ENCODE measurements at regions of chr4 and their contacts with region 1.

Region 1: GRCh38 chr4:15805583-15806517 is 27.7 kb downstream of the CD38 start:
- DNase-seq: peak; percentile 64 to 83 (median 80)
- H3K4me3 ChIP-seq: no peak overlapping the region
- H3K27ac ChIP-seq: no peak overlapping the region
- H3K4me1 ChIP-seq: peaks cover 11 to 18% (median 15%) of the 10 kb centered on the region in 4 experiments
- H3K27me3 ChIP-seq: peaks cover 0 to 3% (median 0%) of the 10 kb centered on the region in 5 experiments

Region 2: DNA sequence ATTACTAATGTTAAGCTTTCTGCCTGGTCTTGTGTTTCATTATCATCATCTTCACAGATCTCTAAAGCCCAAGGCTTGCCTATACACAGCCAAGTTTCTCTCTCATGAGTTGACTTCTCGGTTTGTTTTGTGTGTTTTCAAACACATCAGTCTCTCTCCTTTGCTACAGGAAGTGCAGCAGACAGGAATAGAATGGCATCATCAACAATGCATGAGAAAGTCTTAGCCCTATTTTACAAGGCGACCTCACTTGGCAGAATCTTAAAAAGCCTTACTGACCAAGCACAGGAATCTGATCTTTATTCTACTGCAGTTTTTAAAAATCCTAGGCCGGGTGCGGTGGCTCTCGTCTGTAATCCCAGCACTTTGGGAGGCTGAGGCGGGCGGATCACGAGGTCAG is 299.4 kb before region 1 on chr4:
- CTCF ChIA-PET with region 1: no interaction called
- POLR2A ChIA-PET with region 1: no interaction called
- DNase-seq: no peak
- H3K4me3 ChIP-seq: no peak overlapping the region
- H3K27ac ChIP-seq: no peak overlapping the region
- H3K4me1 ChIP-seq: no peaks in the 10 kb centered on the region
- H3K27me3 ChIP-seq: no peaks in the 10 kb centered on the region

Region 3: GRCh38 chr4:15756361-15756861 is 49.4 kb before region 1 on chr4:
- CTCF ChIA-PET with region 1: interaction called, 36 read pairs
- POLR2A ChIA-PET with region 1: no interaction called
- DNase-seq: peak; percentile 94 to 99 (median 98)
- H3K4me3 ChIP-seq: peak overlapping the region in 5 of 7 experiments; percentile 16 to 72 (median 43)
- H3K27ac ChIP-seq: peak overlapping the region; percentile 13 to 30
- H3K4me1 ChIP-seq: peaks cover 20 to 50% (median 36%) of the 10 kb centered on the region in 4 experiments
- H3K27me3 ChIP-seq: no peaks in the 10 kb centered on the region

Region 4: DNA sequence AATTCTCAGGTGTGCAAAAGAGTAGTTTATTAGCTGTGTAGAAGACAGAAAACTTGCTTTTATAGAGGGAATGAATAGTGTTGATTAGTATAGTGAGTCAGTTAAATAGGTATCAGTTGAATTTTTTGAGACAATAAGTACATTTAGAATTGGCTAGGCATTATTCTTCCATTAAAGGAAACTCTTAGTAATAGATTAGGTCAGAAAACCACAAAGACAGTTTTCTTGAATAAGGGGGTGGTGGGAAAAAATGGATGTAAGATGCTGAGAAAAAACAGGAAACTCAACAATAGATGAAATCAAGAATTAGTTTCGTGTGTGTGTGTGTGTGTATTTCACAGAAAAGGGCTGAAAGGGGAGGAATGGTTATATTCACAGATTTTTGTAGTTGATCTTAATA is 10.9 kb before region 1 on chr4:
- CTCF ChIA-PET with region 1: interaction called, 17 read pairs
- POLR2A ChIA-PET with region 1: no interaction called
- DNase-seq: peak in 2 of 3 donors; percentile 67 to 72
- H3K4me3 ChIP-seq: peak overlapping the region in 1 of 7 experiments; percentile 0
- H3K27ac ChIP-seq: no peak overlapping the region
- H3K4me1 ChIP-seq: peaks cover 9 to 34% (median 16%) of the 10 kb centered on the region in 4 experiments
- H3K27me3 ChIP-seq: peaks cover 0 to 2% (median 0%) of the 10 kb centered on the region in 5 experiments

Region 5: GRCh38 chr4:15956179-15956850 is 150.5 kb after region 1 on chr4:
- CTCF ChIA-PET with region 1: interaction called, 64 read pairs
- POLR2A ChIA-PET with region 1: no interaction called
- DNase-seq: peak; percentile 82 to 94 (median 91)
- H3K4me3 ChIP-seq: no peak overlapping the region
- H3K27ac ChIP-seq: no peak overlapping the region
- H3K4me1 ChIP-seq: peaks cover 0 to 2% (median 0%) of the 10 kb centered on the region in 4 experiments
- H3K27me3 ChIP-seq: no peaks in the 10 kb centered on the region

Region 6: GRCh38 chr4:16001484-16001858 is 195.6 kb after region 1 on chr4:
- CTCF ChIA-PET with region 1: interaction called, 34 read pairs
- POLR2A ChIA-PET with region 1: no interaction called
- DNase-seq: peak; percentile 82 to 95 (median 93)
- H3K4me3 ChIP-seq: no peak overlapping the region
- H3K27ac ChIP-seq: no peak overlapping the region
- H3K4me1 ChIP-seq: peaks cover 0 to 12% (median 7%) of the 10 kb centered on the region in 4 experiments
- H3K27me3 ChIP-seq: no peaks in the 10 kb centered on the region

Region 7: DNA sequence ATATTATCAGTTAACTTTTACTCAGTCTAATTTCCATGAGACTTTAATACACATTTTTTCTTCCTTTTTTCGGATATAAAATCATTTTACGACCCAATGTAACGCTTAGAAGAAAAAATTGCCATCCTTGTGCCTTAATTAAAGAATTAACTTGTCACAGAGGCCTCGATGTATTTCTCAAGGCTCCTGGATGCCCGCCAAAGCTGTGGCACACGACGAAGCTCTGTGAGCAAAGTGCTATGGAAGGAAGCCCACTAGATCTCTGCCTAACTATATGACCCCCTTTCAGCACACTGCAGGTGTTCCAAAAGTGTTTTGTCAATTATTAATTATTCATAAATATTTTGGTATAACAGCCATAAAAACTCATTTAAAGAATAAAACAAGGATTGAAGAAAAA is 366.0 kb after region 1 on chr4:
- CTCF ChIA-PET with region 1: no interaction called
- POLR2A ChIA-PET with region 1: no interaction called
- DNase-seq: no peak
- H3K4me3 ChIP-seq: no peak overlapping the region
- H3K27ac ChIP-seq: no peak overlapping the region
- H3K4me1 ChIP-seq: peaks cover 0 to 3% (median 0%) of the 10 kb centered on the region in 4 experiments
- H3K27me3 ChIP-seq: no peaks in the 10 kb centered on the region

Measured in common myeloid progenitor, CD34-positive (primary cell).